ENCODE measurements at regions of chr2 and their contacts with region 1.

Region 1: GRCh38 chr2:234981197-234982117 is 29.6 kb downstream of the SH3BP4 start:
- DNase-seq: peak; percentile 98 to 100
- H3K4me3 ChIP-seq: peak overlapping the region; percentile 52
- H3K27ac ChIP-seq: peak overlapping the region; percentile 96
- H3K4me1 ChIP-seq: peaks cover 78% of the 10 kb centered on the region
- H3K27me3 ChIP-seq: no peaks in the 10 kb centered on the region
- CTCF ChIP-seq: no peak

Region 2: DNA sequence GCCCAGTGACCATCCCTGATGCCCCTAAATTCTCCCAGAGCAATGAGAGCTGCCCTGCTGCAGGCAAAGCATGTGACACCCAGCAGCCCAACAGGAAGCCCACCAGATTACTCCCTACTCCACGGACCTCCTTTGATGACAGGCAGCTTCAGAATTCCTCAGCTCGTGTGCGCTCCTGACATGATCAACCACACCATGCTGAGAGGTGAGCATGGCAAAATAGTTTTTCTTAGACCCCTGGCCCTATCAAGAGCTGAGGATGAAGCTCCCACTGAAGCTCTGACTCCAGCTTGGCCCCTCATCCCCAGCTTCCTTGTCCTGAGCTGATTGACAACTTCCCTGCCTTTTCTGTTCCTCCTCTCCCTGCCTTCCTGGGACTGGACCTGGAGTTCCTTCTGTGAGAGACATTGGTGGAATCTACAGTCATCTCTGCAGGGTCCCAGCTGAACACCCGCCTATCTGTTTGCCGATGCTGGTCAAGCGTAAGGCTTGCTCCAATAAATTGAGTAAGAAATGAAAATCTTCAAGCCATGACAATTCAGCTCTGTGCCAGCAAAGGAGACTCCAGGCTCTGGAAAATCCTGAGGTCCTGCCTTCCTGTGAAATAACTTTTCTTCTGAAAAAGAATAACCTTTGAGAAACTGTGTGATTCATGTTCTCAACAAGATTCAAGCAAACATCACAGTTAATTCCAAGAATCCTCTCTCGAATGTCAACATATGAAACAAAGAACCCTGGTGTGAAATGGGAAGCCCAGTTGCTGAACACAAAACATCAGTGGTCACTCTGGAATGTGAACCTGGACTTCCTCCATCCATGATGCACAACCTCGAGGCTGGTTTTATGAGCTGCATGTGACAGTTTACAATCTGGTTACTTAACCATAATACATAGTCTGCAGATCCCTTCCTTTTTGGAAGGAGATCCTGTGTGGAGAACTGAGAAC is 729.9 kb before region 1 on chr2:
- CTCF ChIA-PET with region 1: no interaction called
- POLR2A ChIA-PET with region 1: no interaction called
- intact Hi-C with region 1: loop called (anchors 2 kb)
- DNase-seq: peak; percentile 81 to 99
- H3K4me3 ChIP-seq: no peak overlapping the region
- H3K27ac ChIP-seq: peak overlapping the region; percentile 91
- H3K4me1 ChIP-seq: peaks cover 80% of the 10 kb centered on the region
- H3K27me3 ChIP-seq: no peaks in the 10 kb centered on the region
- CTCF ChIP-seq: no peak

Region 3: DNA sequence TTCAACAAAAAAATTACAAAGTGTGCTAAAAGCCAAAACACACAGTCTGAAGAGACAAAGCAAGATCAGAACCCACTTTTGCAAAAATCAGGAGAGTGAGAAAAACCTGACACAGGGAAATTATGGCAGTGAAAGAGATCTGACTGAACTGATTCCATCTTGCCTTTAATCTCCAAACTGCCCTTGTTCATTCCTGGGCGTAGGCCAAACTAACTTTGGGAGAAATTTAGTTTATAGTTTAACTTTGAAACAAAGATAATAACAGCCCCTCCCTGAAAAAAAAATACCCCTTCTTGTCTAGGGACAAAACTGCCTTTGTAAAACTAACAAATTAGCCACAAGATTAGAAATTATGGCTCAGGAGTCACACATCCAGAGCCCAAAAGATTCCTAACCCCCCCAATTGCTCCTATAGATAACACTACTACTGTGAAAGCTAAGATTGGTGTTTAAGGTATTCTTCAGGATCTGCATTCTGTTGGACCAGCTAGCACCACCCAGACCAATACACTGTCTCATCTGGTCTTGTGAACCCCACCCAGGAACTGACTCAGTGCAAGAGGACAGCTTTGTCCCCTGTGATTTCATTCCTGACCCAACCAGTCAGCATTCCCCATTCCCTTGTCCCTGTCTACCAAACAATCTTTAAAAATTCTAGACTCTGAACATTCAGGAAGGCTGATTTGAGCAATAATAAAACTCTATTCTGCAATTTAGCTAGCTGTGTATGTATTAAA is 255.8 kb before region 1 on chr2:
- CTCF ChIA-PET with region 1: no interaction called
- POLR2A ChIA-PET with region 1: interaction called, 15 read pairs
- intact Hi-C with region 1: no loop called
- DNase-seq: no peak
- H3K4me3 ChIP-seq: no peak overlapping the region
- H3K27ac ChIP-seq: peak overlapping the region; percentile 28
- H3K4me1 ChIP-seq: peaks cover 20% of the 10 kb centered on the region
- H3K27me3 ChIP-seq: no peaks in the 10 kb centered on the region
- CTCF ChIP-seq: no peak

Region 4: DNA sequence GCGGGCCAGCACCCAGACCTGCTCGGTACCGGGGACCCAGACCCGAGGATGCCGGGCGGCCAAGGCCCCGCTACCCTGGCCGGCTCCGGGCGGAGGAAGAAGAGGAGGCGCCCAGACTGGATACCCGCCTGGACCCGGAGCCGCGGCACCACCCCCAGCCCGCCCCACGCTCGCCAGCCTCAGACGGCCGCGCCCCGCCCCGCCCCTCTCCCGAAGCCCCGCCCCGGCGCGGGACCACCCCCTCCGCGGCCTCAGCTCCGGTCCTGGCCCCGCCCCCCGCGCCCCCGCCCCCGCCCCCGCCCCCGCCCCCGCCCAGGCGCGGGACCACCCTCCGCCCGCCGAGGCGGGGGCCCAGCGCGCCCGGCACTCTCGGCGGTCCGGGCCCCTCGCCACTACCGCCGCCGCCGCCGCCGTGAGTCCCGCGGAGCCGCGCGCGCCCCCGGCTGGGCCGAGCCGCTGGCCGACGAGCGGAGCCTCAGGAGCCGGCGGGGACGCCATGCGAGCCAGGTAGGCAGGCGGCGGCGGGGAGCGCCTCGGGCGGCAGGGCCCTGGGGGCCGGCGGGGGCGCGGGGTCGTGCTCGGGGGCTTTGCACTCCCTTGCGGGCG is 29.7 kb before region 1 on chr2 and contains the start of gene SH3BP4:
- CTCF ChIA-PET with region 1: no interaction called
- POLR2A ChIA-PET with region 1: interaction called, 10 read pairs
- intact Hi-C with region 1: loop called (anchors 1 kb)
- DNase-seq: peak; percentile 54 to 91
- H3K4me3 ChIP-seq: peak within 1 kb of the TSS; percentile 97
- H3K27ac ChIP-seq: peak within 1 kb of the TSS; percentile 53
- H3K4me1 ChIP-seq: peaks cover 38% of the 10 kb centered on the region
- H3K27me3 ChIP-seq: no peaks in the 10 kb centered on the region
- CTCF ChIP-seq: no peak
- total RNA-seq, gene SH3BP4: 131 and 135 TPM in 2 replicates

Region 5: DNA sequence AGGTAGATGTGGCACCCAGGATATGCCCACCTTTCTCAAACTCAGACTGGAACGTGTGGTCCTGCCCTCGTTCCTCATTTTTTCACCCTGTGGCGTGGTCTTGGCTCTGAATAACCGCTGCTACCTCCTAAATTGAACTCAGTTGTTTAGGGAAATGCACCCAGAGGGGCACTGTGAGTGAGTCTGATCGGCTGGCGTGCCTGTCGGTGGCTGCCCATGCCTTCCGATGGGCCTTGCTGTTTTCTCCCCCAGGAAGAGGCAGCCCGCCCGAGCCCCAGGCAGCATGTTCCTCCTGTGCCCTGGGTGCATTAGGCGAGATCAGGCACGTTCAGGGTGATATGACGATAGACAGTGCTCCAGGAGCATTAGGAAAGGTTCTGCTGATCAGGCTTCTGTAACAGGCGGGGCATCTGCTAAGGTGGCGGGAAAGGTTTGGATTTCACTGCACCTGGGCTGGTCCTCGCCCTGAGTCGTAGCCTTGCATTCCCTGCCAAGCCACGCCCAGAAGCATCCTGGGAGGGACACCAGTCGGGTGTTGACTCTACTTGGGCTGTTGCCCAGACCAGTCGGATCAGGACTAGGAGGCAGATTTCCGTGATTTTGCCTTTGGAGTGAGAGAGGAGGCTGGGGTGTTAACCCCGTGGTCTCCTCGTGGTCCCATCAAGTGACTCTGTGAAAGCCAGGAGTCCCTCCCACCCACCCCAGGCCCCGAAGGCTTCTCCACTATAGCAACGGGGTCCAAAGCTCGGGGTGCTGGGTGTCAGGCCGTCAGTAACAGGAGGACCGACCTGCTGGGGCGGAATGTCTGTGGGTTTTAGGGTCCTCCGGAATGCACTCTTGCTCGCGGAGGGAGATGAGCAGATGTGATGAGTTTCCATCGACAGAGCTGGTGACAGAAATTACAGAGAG is 45.4 kb after region 1 on chr2:
- CTCF ChIA-PET with region 1: interaction called, 7 read pairs
- POLR2A ChIA-PET with region 1: interaction called, 24 read pairs
- intact Hi-C with region 1: loop called (anchors 1 kb)
- DNase-seq: peak; percentile 98 to 99
- H3K4me3 ChIP-seq: peak overlapping the region; percentile 61
- H3K27ac ChIP-seq: peak overlapping the region; percentile 98
- H3K4me1 ChIP-seq: peaks cover 79% of the 10 kb centered on the region
- H3K27me3 ChIP-seq: no peaks in the 10 kb centered on the region
- CTCF ChIP-seq: no peak

Region 6: DNA sequence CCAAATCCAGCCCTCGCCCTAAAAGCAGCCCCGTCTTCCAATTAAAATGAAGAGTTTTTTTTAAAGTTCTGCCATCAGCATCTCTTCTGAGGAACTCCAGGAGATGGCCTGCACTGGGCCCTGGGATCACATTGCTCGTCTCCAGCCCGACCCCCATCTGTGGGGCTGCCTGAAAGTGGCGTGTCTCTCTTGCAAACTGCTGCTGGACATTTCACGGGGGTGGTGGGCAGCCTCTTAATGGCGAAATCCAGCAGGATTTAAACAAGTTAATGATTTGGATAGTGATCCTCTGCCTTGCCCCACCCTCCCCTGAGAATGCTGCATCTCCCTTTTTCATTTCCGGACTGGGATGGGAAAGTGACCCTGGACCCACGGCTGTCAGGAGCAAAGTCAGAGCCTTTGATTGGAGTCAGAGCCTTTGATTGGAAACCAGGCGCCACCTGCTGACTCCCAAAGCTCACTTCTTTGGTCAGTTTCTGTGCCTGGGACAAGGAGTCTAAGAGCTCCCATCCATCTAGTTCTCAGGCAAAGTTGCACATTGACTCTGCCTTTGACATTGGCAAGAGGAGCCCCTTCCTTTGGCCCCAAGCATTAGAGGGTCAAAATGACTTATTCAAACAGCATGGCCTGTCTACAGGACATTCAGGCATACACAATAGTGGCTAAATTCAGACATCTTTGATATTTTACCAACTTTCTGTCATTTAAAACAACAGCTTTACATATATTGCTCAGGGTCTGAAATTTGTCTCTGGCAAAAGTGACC is 125.6 kb after region 1 on chr2:
- CTCF ChIA-PET with region 1: interaction called, 7 read pairs
- POLR2A ChIA-PET with region 1: interaction called, 10 read pairs
- intact Hi-C with region 1: loop called (anchors 2 kb)
- DNase-seq: peak; percentile 72 to 78
- H3K4me3 ChIP-seq: no peak overlapping the region
- H3K27ac ChIP-seq: no peak overlapping the region
- H3K4me1 ChIP-seq: peaks cover 9% of the 10 kb centered on the region; the same call in 1 of the 2 replicates
- H3K27me3 ChIP-seq: no peaks in the 10 kb centered on the region
- CTCF ChIP-seq: peak; percentile 91